Natural killer cell (primary cell): ENCODE measurements at regions of chr1 and their contacts with region 1.

Region 1: GRCh38 chr1:21294266-21294989 is 4.2 kb upstream of the ECE1 start:
- DNase-seq: peak; percentile 74 to 96
- ATAC-seq: peak; percentile 74 to 87 (median 84)
- H3K4me3 ChIP-seq: peak overlapping the region; percentile 23
- H3K4me3 Mint-ChIP-seq: peak overlapping the region; percentile 84
- H3K27ac ChIP-seq: peak overlapping the region; percentile 95
- H3K27ac Mint-ChIP-seq: peak overlapping the region; percentile 94 to 97
- H3K4me1 ChIP-seq: peaks cover 83% of the 10 kb centered on the region
- H3K4me1 Mint-ChIP-seq: peaks cover 37 to 53% of the 10 kb centered on the region in 2 donors
- H3K27me3 ChIP-seq: no peaks in the 10 kb centered on the region
- H3K27me3 Mint-ChIP-seq: peaks cover 0 to 5% of the 10 kb centered on the region in 2 donors
- CTCF ChIP-seq: no peak

Region 2: GRCh38 chr1:21278208-21278859 is 16.1 kb before region 1 on chr1:
- intact Hi-C with region 1: loop called (anchors 1 kb)
- DNase-seq: no peak
- ATAC-seq: peak in 1 of 3 donors; percentile 26
- H3K4me3 ChIP-seq: no peak overlapping the region
- H3K4me3 Mint-ChIP-seq: peak overlapping the region; percentile 72
- H3K27ac ChIP-seq: no peak overlapping the region
- H3K27ac Mint-ChIP-seq: peak overlapping the region; percentile 64 to 73
- H3K4me1 ChIP-seq: peaks cover 31% of the 10 kb centered on the region
- H3K4me1 Mint-ChIP-seq: peaks cover 34 to 40% of the 10 kb centered on the region in 2 donors
- H3K27me3 ChIP-seq: peaks cover 9% of the 10 kb centered on the region
- H3K27me3 Mint-ChIP-seq: peaks cover 0 to 9% of the 10 kb centered on the region in 2 donors
- CTCF ChIP-seq: no peak

Region 3: DNA sequence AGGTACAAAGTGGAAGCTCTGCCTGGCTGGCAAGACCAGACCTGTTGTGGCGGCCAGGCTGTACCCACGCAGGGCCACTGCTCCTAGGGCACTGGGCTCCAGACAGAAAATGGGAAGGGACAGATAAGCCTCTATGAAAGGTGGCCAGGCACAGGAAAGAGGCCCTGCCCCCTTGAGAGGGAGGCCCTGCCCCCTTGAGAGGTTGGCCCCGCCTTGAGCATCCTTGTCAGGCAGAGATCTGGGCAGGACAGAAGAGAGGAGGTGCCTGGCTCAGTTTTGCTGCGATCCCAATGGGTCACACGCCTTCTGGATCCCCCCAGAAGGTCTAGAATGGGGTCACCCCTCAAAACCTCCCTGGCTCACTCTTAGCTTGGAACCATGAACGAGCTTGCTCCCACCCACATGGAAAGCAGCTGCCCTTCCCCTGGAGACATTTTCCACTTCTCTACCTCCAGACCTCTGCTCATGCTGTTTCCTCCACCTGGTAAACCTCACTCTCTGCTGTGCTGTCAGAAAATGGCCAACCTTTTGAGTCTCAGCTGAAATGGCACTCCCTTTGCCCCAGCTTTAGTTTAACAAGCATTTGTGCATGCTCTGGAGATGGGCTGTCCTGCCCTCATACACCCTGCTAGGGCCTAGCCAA is 13.4 kb after region 1 on chr1:
- intact Hi-C with region 1: loop called (anchors 1 kb)
- DNase-seq: peak in 1 of 2 donors; percentile 36
- ATAC-seq: peak; percentile 45 to 60 (median 49)
- H3K4me3 ChIP-seq: no peak overlapping the region
- H3K4me3 Mint-ChIP-seq: peak overlapping the region; percentile 56
- H3K27ac ChIP-seq: no peak overlapping the region
- H3K27ac Mint-ChIP-seq: peak overlapping the region; percentile 83 to 93
- H3K4me1 ChIP-seq: peaks cover 27% of the 10 kb centered on the region
- H3K4me1 Mint-ChIP-seq: peaks cover 36 to 47% of the 10 kb centered on the region in 2 donors
- H3K27me3 ChIP-seq: no peaks in the 10 kb centered on the region
- H3K27me3 Mint-ChIP-seq: no peaks in the 10 kb centered on the region
- CTCF ChIP-seq: no peak

Region 4: DNA sequence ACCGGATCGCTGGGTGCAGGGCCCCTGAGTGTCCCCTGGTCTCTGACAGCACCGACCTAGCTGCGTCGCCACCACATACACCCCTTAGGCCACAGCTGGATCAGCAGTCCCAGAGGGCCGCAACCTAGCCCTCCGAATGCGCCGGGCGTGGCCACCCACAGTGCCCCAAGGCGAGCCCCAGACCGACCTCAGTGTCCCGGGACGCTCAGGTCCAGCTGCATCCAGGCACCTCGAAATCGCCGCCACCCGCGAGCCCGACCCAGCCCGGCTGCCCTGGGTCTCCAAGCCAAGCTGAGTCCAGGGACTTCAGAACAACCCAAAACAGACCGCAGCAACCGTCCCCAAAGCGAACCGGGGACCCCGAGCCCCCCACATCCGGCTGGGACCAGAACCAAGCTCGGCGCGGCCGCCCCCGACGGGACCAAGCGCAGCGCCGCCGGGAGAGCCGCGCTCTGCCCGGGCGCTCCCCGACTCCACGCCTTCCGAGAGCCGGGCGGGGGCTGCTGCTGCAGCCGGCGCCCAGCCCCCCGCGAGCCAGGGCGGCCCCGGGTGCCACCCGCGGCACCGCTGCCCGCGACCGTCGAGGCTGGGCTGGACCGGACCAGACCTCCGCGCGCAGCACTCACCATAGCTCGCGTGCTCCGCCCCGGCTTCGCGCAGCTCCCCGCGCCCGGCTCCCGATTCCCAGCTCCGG is 50.5 kb after region 1 on chr1:
- intact Hi-C with region 1: loop called (anchors 2 kb)
- DNase-seq: no peak
- ATAC-seq: peak; percentile 29 to 42 (median 36)
- H3K4me3 ChIP-seq: peak overlapping the region; percentile 80
- H3K4me3 Mint-ChIP-seq: peak overlapping the region; percentile 92
- H3K27ac ChIP-seq: peak overlapping the region; percentile 7
- H3K27ac Mint-ChIP-seq: peak overlapping the region in 1 of 2 donors; percentile 78
- H3K4me1 ChIP-seq: peaks cover 43% of the 10 kb centered on the region
- H3K4me1 Mint-ChIP-seq: peaks cover 42 to 49% of the 10 kb centered on the region in 2 donors
- H3K27me3 ChIP-seq: peaks cover 8% of the 10 kb centered on the region
- H3K27me3 Mint-ChIP-seq: no peaks in the 10 kb centered on the region
- CTCF ChIP-seq: no peak

Region 5: GRCh38 chr1:21478974-21479373 is 184.5 kb after region 1 on chr1:
- intact Hi-C with region 1: no loop called
- DNase-seq: no peak
- ATAC-seq: no peak
- H3K4me3 ChIP-seq: no peak overlapping the region
- H3K4me3 Mint-ChIP-seq: no peak overlapping the region
- H3K27ac ChIP-seq: no peak overlapping the region
- H3K27ac Mint-ChIP-seq: no peak overlapping the region
- H3K4me1 ChIP-seq: no peaks in the 10 kb centered on the region
- H3K4me1 Mint-ChIP-seq: no peaks in the 10 kb centered on the region
- H3K27me3 ChIP-seq: no peaks in the 10 kb centered on the region
- H3K27me3 Mint-ChIP-seq: no peaks in the 10 kb centered on the region
- CTCF ChIP-seq: no peak